Posterior cingulate gyrus (tissue), 11 donors: ENCODE measurements at regions of chr1 and their contacts with region 1.

Region 1: DNA sequence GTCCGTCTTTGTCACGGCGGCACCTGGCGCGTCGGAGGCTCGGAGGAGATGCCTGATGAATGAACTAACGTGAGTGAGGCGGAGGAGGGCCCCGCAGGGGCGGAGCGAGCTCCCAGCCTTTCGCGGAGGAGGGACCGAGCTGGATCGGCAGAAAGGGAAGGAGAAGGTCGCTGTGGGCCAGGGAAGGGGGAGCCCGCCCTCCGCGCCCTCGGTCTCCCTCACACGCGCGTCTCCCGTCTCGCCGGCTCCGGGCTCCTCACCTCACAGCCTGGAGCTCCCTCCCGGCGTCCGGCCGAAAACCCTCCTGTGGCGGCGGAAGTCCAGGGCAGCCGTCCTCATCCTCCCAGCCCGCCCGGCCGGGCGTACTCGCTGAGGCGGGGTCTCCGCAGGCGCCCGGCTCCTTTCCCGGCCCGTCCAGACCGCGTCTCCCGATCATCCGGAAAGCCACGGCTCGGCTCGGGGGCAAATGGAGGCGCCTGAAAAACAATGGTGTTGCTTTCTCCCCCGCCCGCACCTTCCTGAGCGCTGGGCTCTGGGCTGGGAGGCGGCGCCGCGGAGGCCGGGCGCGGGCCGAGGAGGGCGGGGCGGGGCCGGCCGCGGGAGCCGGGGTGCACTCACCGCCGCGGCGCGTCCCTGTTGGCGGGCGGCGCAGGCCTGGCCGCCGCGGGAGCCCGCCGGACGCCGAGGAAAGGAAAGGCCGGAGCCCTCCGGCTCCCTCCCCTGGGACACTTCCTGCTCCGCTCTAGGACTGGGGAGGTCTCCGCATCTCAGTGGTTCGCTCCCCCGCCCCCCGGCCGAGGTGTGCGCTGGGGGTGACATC is at the start of gene ZNF496:
- DNase-seq: peak; percentile 56 to 96 (median 68)

Region 2: GRCh38 chr1:247103859-247104591 is 227.4 kb before region 1 on chr1 and contains the start of gene ZNF669:
- intact Hi-C with region 1: loop called (anchors 10 kb)
- DNase-seq: peak; percentile 94 to 100 (median 98)

Region 3: GRCh38 chr1:247210376-247211117 is 120.8 kb before region 1 on chr1:
- intact Hi-C with region 1: loop called (anchors 2 kb)
- DNase-seq: peak; percentile 94 to 100 (median 98)

Region 4: GRCh38 chr1:247273013-247273412 is 58.4 kb before region 1 on chr1:
- intact Hi-C with region 1: no loop called
- DNase-seq: peak in 8 of 10 donors; percentile 18 to 89 (median 36)